ENCODE measurements at regions of chr10 and their contacts with region 1.

Region 1: GRCh38 chr10:104034401-104035193 is 51.1 kb downstream of the COL17A1 start:
- DNase-seq: no peak

Region 2: GRCh38 chr10:103740611-103741010 is 294.0 kb before region 1 on chr10:
- intact Hi-C with region 1: loop called in 1 of 2 experiments (anchors 5 kb)
- DNase-seq: no peak

Measured in posterior vena cava (tissue), 2 donors.